Mucosa of descending colon (tissue), 3 donors: ENCODE measurements at regions of chr1 and their contacts with region 1.

Region 1: DNA sequence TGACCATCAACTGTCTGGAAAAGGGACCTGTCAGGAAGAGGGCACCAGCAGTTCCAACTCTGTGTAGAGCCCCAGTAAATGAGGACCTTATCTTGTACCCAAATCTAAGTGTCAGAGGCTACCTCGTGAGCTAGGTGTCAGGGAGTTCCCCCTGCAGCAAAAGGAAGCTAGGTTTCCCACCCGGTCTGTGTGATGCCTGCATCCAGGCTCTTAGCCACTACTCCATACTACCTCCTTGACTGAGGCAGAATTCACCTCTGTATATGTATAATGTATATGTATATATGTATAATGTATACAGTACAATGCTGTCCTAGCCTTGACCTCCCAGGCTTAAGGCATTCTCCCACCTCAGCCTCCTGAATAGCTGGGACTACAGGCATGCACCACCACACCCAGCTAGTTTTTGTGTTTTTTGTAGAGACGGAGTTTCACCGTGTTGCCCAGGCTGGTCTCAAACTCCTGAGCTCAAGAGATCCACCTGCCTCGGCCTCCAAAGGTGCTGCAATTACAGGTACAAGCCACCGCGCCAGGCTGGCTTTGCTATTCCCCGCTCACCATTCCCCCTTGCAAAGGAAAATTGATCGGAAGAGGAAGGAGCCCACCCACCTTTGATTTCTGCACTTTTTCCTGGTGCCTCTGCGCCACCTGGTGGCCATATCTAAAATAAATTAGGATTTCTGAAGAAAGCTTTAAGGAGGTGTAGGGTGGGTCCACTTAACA is 15.7 kb upstream of the LUZP1 start:
- DNase-seq: peak in 2 of 3 donors; percentile 40 to 54
- ATAC-seq: no peak
- H3K4me3 ChIP-seq: no peak overlapping the region
- H3K4me1 ChIP-seq: peaks cover 6% of the 10 kb centered on the region
- CTCF ChIP-seq: peak; percentile 31

Region 2: DNA sequence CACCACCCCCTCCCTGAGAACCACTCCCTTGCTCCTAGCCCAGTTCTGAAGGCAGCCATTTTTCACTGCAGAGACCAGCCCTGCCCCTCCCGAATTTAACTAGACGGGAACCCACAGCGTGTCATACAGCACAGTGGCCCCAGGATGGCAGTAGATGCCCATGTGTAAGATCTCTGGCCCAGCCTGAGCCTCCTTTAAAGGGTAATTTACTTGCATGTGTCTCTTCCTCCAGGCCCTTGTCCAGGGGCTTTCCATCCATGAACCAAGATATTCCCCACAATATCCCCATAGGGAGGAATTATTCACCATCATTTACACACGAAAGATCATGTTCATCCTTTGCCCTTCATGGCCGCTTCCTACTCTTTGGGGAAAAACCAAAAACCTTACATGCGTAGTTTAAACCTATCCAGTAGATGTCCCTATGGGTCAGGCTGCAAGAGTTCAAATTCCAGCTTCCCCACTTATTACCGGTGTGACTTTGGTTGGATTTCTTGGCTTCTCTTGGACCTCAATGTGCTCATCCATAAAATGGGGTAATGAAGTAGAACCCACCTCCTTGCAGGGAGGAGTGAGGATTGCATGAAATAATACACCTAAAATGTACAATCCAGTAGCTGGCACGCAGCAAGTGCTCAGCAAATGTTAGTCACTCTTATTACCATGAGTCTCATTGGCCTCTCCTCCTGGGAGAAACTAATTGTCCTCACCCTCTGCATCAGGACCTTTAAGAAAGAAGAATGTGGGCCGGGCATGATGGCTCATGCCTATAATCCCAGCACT is 207.7 kb before region 1 on chr1:
- intact Hi-C with region 1: loop called in 1 of 2 experiments (anchors 10 kb)
- DNase-seq: peak in 2 of 3 donors; percentile 72 to 73
- ATAC-seq: peak; percentile 96
- H3K4me3 ChIP-seq: no peak overlapping the region
- H3K4me1 ChIP-seq: no peaks in the 10 kb centered on the region
- CTCF ChIP-seq: peak; percentile 55

Region 3: DNA sequence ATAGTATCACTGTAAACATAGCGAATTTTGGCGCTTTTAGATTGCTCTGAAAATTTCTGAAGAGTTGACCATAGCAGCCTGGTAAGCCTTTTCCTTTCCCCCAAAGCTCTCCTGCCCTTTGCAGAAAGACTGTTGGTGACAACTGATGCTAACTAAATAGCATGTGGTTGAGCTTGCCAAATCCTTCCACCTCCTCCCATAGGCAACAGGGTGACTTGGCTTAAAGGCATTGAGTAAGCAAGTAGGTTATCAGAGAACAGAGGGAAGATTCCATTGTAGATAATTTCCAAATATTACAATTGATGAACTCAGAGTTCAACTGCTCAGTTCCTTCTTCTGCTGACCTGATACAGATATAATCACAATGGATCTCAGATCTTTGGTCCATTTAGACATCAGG is 660.8 kb after region 1 on chr1:
- intact Hi-C with region 1: no loop called
- DNase-seq: no peak
- ATAC-seq: no peak
- H3K4me3 ChIP-seq: no peak overlapping the region
- H3K4me1 ChIP-seq: no peaks in the 10 kb centered on the region
- CTCF ChIP-seq: no peak